BJ (cell line): ENCODE measurements at regions of chr2 and their contacts with region 1.

Region 1: DNA sequence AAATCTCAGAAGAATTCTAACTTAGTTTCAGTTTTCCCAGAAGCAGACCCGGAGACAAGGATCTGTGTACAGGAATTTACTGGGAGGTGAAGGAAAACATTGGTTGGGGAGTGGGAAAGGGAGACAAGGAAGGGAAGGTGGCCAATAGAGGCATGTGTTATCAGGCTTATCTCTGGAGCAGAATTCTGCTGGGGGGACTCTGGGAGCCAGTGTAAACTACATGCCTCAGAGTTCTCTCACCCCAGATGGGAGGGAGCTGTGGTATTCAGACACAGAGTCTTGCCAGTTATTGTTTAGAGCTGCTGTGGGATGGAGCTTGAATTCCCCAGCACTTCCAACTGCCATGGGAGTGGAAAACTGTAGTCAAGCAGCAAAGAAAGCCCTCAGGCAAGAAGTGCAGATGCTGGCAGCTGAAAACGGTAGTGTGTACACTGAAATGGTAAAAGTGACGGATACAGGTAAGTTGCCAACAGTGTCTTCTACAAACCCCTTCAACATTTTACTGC is 19.0 kb downstream of the DNPEP start:
- DNase-seq: peak; percentile 88
- H3K4me3 ChIP-seq: no peak overlapping the region
- H3K27me3 ChIP-seq: no peaks in the 10 kb centered on the region
- CTCF ChIP-seq: no peak

Region 2: GRCh38 chr2:219352448-219353023 is 16.2 kb before region 1 on chr2:
- CTCF ChIA-PET with region 1: interaction called, 5 read pairs
- POLR2A ChIA-PET with region 1: interaction called, 21 read pairs
- DNase-seq: no peak
- H3K4me3 ChIP-seq: no peak overlapping the region
- H3K27me3 ChIP-seq: peaks cover 3% of the 10 kb centered on the region
- CTCF ChIP-seq: peak; percentile 72